Posterior vena cava (tissue), 2 donors: ENCODE measurements at regions of chr21 and their contacts with region 1.

Region 1: GRCh38 chr21:44965251-44966022 is 25.6 kb downstream of the SLX9 start:
- DNase-seq: no peak

Region 2: GRCh38 chr21:44920694-44921604 is 44.5 kb before region 1 on chr21 and contains the start of gene ITGB2:
- intact Hi-C with region 1: no loop called
- DNase-seq: no peak
- total RNA-seq, gene ITGB2: 47.9 to 122 TPM

Region 3: GRCh38 chr21:44982558-44983244 is 17.3 kb after region 1 on chr21:
- intact Hi-C with region 1: no loop called
- DNase-seq: peak; percentile 89

Region 4: DNA sequence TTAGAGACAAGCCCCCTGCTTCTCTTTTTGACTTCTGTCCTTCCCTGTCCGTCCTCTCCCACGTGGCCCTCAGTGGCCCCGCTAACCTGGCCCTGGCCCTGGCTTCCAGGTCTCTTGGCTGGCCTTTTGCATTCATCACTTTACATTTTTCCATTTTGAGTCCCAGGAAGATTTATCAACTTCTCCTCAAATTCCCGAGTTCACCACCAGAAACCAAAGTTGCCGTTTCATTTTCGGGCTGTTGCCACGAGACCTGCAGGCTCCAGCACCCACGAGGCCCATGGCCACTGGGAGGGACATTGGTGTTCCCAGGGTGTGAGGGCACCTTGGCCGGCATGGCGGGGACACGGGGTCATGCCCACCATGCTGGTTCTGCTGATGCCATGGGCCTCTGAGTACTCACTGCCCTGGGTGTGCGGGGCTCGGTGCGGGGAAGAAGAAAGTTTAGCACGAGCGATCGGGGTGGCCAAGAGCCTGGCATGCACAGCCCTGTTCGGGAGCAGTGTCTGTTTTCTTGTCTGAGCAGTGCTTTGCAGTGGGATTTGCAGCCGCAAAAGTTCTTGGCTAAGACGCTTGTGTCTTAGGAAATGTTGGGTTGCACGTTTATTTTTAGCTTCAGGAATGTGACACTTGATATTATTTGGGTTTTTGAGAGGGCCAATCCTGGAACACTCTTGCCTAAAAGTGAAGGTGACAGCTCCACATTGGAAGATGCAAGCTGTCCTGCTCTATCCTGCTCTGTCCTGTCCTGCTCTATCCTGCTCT is 68.5 kb after region 1 on chr21:
- intact Hi-C with region 1: loop called in 1 of 2 experiments (anchors 5 kb)
- DNase-seq: peak; percentile 84

Region 5: DNA sequence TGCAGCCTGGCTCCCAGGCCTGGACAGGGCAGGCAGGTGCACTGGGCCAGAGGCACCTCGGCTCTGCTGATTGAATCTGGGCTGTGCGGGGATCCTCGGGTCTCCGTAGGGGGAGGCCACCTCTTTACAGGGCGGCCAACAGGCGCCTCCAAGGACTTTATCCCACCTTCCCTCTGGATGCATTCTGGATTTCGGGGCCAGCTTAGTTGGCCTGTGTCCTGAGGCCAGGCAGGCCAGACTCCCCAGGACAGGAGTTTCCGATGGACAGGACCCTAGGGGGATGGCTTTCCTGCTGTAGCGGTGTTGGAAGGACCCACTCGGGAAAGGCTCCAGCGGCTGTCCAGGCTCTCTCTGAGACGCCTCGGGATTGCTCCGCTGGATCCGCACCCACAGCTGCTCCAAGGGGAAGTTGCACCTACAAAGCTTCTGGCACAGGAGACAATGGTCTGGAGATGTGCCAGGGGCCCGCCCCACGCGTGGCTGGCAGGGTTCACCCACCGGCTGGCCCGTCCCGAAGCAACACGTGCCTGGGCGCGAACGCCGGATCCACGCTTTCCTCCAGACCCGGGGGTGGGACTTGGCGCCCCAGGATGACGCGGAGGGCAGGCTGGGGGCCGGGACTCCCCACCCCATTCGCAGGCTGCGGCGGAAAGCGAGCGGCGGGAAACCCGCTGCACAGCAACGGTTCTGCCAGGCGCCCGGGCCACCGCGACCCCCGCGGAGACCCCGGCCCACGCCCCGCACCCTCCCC is 576.0 kb after region 1 on chr21:
- intact Hi-C with region 1: no loop called
- DNase-seq: peak; percentile 95